ENCODE measurements at regions of chr15 and their contacts with region 1.

Region 1: DNA sequence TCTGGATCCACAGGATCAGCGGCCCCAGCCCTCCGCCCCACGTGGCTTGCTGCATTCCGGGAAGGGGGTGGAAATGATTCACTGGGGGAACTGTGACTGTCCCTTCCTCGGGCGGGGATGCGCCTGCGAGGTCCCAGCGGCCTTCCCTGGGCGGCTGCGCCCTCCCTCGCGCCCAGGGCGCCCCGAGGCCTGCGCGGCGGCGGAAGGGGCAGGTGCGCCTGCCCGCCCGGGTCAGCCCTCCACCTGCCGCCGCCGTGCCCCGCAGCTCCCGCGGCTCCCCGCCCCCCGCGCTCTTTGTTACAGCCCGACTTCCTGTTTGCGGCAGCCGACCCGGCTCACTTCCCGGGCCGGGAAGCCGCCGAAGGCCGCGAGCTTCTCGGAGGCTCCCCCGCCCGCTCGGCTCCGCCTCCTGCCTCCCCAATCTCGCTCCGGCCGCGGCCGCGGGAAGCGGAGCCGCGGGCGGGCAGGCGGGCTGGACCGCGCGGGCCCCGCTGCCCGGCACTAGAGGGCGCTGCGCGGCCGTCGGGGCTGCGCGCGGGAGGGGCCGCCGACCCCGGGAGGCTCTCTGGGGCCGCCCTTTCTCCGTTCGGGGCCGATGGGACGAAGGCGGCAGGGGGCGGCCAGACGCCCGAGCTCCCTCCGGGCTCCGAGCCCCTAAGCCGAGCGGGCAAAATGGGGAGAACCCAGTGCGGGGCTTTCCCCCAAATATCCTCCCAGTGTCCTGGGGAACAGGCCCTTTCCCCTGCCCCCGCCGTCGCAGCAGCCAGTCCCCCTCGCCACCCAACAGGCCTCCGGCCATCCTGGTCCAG is 11.5 kb upstream of the CHAC1 start:
- DNase-seq: no peak
- H3K4me3 ChIP-seq: peak overlapping the region; percentile 59 to 80 (median 68)
- H3K27ac ChIP-seq: peak overlapping the region; percentile 80 to 91 (median 86)
- H3K4me1 ChIP-seq: peaks cover 37 to 58% (median 41%) of the 10 kb centered on the region in 4 donors
- H3K27me3 ChIP-seq: peaks cover 0 to 4% (median 0%) of the 10 kb centered on the region in 4 donors
- CTCF ChIP-seq: peak; percentile 55 to 87 (median 81)
- EP300 ChIP-seq: no peak
- POLR2A ChIP-seq: no peak

Region 2: GRCh38 chr15:41018502-41018901 is 76.8 kb after region 1 on chr15:
- intact Hi-C with region 1: loop called (anchors 2 kb)
- DNase-seq: no peak
- H3K4me3 ChIP-seq: no peak overlapping the region
- H3K27ac ChIP-seq: no peak overlapping the region
- H3K4me1 ChIP-seq: peaks cover 15 to 44% (median 37%) of the 10 kb centered on the region in 4 donors
- H3K27me3 ChIP-seq: no peaks in the 10 kb centered on the region
- CTCF ChIP-seq: peak in 2 of 3 experiments; percentile 51
- EP300 ChIP-seq: no peak
- POLR2A ChIP-seq: no peak